Activated CD4-positive, alpha-beta memory T cell treated with anti-CD3 and anti-CD28 coated beads for 36 hours (primary cell): ENCODE measurements at regions of chr2 and their contacts with region 1.

Region 1: DNA sequence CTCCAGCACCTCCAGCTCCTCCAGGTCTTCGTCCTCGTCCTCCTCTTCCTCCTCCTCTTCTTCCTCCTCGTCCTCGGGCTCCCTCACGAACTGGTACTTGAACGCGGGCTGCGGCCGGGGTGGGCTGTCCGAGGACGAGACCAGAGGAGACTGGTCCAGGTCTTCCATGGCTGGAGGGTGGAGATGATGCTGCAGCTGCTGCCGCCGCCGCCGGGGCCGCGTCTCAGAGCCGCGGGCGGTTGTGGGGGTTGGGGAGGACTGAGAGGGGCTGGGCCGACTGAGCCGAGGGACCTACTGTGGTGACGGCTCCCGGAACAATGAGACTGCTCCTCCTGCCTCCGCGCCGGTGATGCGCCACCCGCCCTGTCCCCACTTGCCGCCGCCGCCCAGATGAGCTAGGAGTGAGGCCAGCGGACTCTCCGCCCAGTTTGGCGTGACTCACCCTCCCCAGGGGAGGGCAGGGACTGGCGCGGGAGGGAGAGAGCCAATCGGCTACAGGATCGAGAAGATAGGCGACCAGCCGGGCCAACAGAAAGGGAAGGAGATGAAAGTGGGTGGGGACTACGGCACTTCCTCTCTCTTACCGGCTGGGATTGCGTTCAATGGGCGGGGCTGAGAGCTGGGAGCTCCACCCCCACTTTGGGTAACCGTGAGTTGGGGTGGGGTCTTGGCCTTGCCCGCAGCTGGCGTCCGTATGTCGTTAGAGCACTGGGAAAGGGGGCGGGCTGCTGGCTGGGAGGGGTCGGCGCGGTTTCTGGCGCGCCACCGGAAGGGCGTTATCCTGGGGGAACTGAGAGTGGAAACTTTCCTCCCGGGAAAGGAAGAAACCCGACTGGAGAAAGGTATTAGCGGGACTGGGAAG is at the start of gene RTN4:
- DNase-seq: peak; percentile 99
- H3K4me3 Mint-ChIP-seq: peak within 1 kb of the TSS; percentile 96
- H3K27ac Mint-ChIP-seq: peak within 1 kb of the TSS; percentile 98
- H3K4me1 Mint-ChIP-seq: peaks cover 58% of the 10 kb centered on the region
- H3K27me3 Mint-ChIP-seq: no peaks in the 10 kb centered on the region
- total RNA-seq, gene RTN4: 96.7 to 97.5 TPM

Region 2: DNA sequence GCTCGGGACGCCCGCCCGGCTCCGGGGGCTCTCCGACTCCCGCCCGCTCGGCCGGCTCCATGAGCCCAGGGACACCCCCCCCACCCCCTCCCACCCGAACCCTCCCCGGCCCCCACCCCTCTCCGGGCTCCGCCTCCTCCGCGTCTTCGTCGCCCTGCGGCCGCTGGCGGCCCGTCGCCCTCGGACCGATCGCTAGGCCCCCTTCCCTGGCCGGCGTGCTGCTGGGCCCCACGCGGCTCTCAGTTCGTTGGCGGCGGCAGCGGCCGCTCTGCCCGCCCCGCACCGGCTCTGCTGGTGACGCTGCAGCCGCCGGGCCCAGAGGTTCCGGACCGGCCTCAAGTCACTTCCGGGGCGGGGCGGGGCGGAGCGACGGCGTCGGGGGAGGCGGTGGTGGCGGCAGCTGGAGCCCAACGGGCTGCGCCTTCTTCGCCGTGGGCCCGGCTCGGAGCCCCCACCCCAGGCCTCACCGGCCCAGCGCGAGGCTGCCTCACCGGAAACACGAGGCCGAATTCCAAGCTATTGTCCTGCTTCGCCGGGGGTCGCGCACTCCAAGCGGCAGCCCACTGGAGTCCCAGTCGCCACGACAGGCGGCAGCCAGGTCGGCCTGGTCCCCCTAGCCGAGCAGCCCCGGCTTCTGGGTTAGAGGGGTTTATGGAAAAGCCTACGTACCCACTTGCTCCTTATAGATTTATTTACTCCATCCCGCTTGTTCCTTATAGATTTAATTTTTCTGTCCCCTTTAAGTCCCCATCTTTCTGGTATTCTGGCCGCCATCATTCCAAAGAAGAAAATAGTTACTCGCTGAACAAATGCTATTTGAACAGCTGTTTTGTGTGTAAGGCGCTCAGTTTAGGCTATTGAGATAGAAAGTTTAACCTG is 1079.4 kb before region 1 on chr2 and contains the start of gene PSME4:
- CTCF ChIA-PET with region 1: no interaction called
- POLR2A ChIA-PET with region 1: no interaction called
- intact Hi-C with region 1: loop called (anchors 5 kb)
- DNase-seq: peak; percentile 95
- H3K4me3 Mint-ChIP-seq: peak within 1 kb of the TSS; percentile 80
- H3K27ac Mint-ChIP-seq: peak within 1 kb of the TSS; percentile 85
- H3K4me1 Mint-ChIP-seq: peaks cover 37% of the 10 kb centered on the region
- H3K27me3 Mint-ChIP-seq: no peaks in the 10 kb centered on the region
- total RNA-seq, gene PSME4: 35.2 to 36.9 TPM

Region 3: GRCh38 chr2:54723131-54723995 is 327.0 kb before region 1 on chr2 and contains the start of gene EML6:
- CTCF ChIA-PET with region 1: no interaction called
- POLR2A ChIA-PET with region 1: no interaction called
- intact Hi-C with region 1: loop called (anchors 1 kb)
- DNase-seq: peak; percentile 99
- H3K4me3 Mint-ChIP-seq: peak within 1 kb of the TSS; percentile 85
- H3K27ac Mint-ChIP-seq: peak within 1 kb of the TSS; percentile 34
- H3K4me1 Mint-ChIP-seq: peaks cover 12% of the 10 kb centered on the region
- H3K27me3 Mint-ChIP-seq: peaks cover 31% of the 10 kb centered on the region
- total RNA-seq, gene EML6: 0.46 to 0.50 TPM

Region 4: DNA sequence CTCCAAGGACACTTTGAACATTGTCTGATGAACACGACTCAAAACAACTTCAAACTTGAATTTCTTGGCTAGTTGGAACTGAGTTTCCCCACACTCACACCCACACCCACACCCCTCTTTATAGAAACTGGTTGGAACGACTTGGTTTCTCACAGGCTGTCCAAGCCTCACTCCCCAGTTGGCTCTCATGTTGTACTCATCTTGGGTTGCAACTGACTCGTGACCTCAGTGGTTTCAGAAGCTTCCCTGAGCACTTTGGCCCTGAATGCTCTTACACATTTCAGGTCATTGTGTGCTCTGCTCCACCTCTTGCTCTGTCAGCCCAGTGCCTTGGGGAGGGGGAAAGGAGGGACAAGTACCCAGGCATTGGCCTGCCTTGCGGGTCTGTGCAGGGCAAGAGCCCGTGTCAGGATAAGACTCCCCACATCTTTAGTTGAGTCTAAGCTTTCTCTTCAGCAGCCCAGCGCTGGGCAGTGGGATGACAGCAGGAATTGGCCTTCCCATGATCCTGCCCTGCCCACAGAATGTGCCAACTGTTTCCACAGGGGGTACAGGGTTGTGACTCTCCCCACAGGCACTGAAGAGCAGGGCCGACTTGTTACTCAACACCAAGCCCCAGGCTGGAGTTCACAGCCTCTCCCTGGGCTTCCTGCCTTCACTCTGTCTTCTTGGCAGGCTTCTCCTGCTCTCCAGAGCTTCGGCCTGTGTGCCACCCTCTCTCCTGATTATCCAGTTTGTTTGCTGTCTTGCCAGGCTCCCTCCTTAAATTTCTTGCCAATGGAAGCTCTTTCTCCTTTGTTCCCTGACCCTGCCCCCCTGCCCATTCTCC is 104.8 kb before region 1 on chr2:
- CTCF ChIA-PET with region 1: no interaction called
- POLR2A ChIA-PET with region 1: no interaction called
- intact Hi-C with region 1: no loop called
- DNase-seq: peak; percentile 53
- H3K4me3 Mint-ChIP-seq: no peak overlapping the region
- H3K27ac Mint-ChIP-seq: no peak overlapping the region
- H3K4me1 Mint-ChIP-seq: peaks cover 6% of the 10 kb centered on the region
- H3K27me3 Mint-ChIP-seq: no peaks in the 10 kb centered on the region

Region 5: DNA sequence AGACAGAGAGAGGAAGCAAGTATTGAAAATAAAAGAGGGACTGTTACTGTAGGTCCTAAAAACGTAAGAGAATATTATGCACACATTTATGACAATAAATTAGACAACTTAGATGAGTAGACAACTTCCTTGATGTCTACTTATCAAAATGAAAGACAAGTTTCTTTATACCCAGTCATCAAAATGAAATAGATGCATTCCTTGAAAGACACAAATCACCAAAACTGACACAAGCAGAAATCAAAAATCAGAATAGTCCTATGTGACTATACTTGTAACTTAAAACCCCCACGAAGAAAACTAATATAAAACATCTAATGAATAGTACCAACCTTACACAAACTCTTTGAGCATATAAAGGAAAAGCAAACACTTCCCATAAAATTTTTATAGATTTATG is 14.6 kb before region 1 on chr2:
- CTCF ChIA-PET with region 1: interaction called, 7 read pairs
- POLR2A ChIA-PET with region 1: interaction called, 3 read pairs
- intact Hi-C with region 1: loop called (anchors 1 kb)
- DNase-seq: no peak
- H3K4me3 Mint-ChIP-seq: no peak overlapping the region
- H3K27ac Mint-ChIP-seq: peak overlapping the region; percentile 0
- H3K4me1 Mint-ChIP-seq: peaks cover 61% of the 10 kb centered on the region
- H3K27me3 Mint-ChIP-seq: no peaks in the 10 kb centered on the region

Region 6: DNA sequence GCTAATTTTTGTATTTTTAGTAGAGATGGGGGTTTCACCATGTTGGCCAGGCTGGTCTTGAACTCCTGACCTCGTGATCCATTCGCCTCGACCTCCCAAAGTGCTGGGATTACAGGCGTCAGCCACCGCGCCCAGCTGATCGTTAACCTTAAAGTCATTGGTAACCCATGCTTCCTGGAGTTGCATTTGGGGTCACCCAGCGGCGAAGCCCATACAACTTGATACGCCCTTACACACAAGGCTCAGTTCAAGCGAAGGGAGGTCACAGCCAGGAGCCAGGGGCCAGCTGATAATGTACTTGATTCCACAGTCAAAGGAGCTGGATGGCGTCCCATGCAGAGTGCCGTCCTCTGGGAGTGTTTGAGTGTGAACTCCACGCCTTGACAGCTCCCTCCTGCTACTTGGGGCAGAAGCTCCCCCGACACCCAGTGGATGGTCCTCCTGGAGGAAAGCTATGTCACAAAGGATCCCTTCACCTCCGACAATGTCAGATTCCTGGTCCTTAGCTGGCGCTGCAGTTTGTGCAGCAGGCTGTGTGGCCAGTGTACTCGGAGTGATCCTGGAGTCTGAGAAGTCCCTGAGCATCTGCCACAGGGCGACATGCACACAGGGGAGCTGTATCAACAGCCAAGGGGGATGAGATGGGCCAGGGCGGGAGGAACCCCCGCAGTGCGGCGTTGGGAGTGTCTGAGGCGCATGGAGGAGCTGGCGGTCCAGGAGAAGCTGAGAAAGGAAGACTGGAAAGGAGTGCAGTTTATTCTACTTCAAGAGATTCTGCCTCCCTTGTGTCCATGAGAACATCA is 173.8 kb after region 1 on chr2:
- CTCF ChIA-PET with region 1: interaction called, 3 read pairs
- POLR2A ChIA-PET with region 1: interaction called, 7 read pairs
- intact Hi-C with region 1: loop called (anchors 2 kb)
- DNase-seq: peak; percentile 16
- H3K4me3 Mint-ChIP-seq: peak overlapping the region; percentile 67
- H3K27ac Mint-ChIP-seq: peak overlapping the region; percentile 76
- H3K4me1 Mint-ChIP-seq: peaks cover 42% of the 10 kb centered on the region
- H3K27me3 Mint-ChIP-seq: no peaks in the 10 kb centered on the region

Region 7: DNA sequence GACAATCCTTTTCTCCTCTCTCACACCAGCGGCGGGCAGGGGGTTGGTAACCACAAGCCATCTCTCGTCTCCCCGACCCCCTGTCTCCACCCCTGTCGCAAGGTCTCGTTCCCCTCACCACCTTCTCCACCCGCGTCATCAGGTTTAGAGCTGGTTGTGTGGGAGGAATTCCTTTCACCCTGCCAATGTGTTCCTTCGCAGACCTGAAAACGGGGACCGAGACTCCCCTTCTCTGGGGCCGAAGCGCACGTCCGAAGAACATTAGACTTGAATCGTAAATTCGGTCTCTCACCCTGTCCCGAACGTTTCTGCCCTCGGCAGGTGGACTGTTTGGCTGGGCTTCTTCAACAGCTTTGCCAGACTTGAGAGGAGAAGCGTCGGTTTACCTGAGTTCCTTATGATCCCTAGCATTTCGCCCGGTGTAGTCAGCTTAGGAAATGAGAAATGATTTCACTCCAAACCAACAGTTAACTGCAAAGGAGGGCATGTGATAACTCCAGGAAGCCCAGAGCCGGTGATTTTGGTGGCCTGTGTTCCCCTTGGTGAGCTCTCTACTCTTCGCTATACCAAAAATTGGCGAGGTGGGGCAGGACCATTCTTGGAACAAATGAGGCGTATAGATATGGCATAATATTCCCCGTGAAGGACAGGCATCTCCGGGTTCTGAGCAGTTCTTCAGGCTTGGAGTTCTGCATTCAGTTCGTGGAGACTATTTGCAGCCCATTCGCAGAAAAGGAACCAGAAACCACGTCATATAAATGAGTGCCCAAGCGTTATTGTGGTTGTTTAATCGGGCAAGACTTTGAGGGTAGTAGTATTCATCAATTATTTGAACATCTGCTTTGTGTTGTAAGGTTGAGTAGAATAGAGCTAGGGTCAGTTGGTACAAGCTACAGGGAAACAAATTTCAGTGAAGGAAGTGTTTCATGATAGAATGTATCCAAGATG is 469.8 kb after region 1 on chr2:
- CTCF ChIA-PET with region 1: no interaction called
- POLR2A ChIA-PET with region 1: no interaction called
- intact Hi-C with region 1: loop called (anchors 1 kb)
- DNase-seq: peak; percentile 55
- H3K4me3 Mint-ChIP-seq: peak overlapping the region; percentile 99
- H3K27ac Mint-ChIP-seq: peak overlapping the region; percentile 95
- H3K4me1 Mint-ChIP-seq: peaks cover 9% of the 10 kb centered on the region
- H3K27me3 Mint-ChIP-seq: no peaks in the 10 kb centered on the region